IMR-90 (cell line): ENCODE measurements at regions of chr5 and their contacts with region 1.

Region 1: DNA sequence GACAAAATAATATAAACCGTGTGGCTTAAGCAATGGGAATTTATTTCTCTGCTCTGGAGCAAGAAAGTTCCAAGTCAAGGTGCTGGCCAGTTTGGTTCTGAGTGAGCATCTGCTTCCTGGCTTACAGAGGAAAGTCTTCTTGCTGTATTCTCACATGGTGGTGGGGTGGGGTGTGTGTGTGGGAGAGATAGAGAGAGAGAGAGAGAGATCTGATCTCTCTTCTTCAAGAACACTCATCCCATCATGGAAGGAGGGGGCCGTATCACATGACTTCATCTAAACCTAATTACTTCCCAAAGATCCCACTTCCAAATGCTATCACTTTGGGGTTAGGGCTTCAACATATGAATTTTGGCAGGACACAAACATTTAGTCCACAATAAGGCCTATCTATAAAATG is 91.2 kb downstream of the PRR16 start:
- DNase-seq: no peak
- ATAC-seq: no peak
- H3K4me3 ChIP-seq: no peak overlapping the region
- H3K27ac ChIP-seq: no peak overlapping the region
- H3K4me1 ChIP-seq: 0 out of 2 replicates have a peak, but pooled peaks cover 2% of the 10 kb centered on the region
- H3K27me3 ChIP-seq: no peaks in the 10 kb centered on the region
- CTCF ChIP-seq: no peak
- POLR2A ChIP-seq: no peak
- RAD21 ChIP-seq: no peak

Region 2: DNA sequence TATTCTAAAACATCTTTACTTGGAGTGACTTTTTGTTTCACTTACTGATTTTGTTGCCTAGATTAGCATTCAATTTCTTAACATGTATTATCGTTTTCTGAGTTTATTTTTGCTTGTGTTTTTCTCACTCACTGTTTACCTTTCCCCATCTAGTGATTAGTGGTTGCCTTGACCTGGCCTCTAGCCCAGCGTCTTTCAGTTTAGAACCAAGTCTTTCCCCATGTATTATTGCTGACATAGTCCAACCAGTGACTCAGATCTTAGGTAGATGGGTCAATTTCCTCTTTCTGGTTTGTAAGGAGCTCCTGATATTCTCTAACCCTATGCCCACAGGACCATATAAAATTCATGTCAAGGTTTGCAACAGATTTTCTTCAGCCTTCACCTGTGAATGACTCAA is 44.2 kb after region 1 on chr5:
- CTCF ChIA-PET with region 1: no interaction called
- POLR2A ChIA-PET with region 1: no interaction called
- dilution Hi-C with region 1: no loop called
- in situ Hi-C with region 1: no loop called
- intact Hi-C with region 1: loop called (anchors 5 kb)
- DNase-seq: peak; percentile 84
- ATAC-seq: peak; percentile 75
- H3K4me3 ChIP-seq: no peak overlapping the region
- H3K27ac ChIP-seq: no peak overlapping the region
- H3K4me1 ChIP-seq: peaks cover 2% of the 10 kb centered on the region; the same call in 1 of the 2 replicates
- H3K27me3 ChIP-seq: no peaks in the 10 kb centered on the region
- CTCF ChIP-seq: no peak
- POLR2A ChIP-seq: no peak
- RAD21 ChIP-seq: no peak